ENCODE measurements at regions of chr2 and their contacts with region 1.

Region 1: GRCh38 chr2:25362049-25362433 is 20.3 kb upstream of the DNMT3A start:
- DNase-seq: peak; percentile 96
- H3K4me3 Mint-ChIP-seq: peak overlapping the region; percentile 83
- H3K27ac Mint-ChIP-seq: peak overlapping the region; percentile 82
- H3K4me1 Mint-ChIP-seq: peaks cover 22% of the 10 kb centered on the region
- H3K27me3 Mint-ChIP-seq: no peaks in the 10 kb centered on the region

Region 2: GRCh38 chr2:25309402-25309801 is 52.6 kb before region 1 on chr2:
- CTCF ChIA-PET with region 1: interaction called, 27 read pairs
- POLR2A ChIA-PET with region 1: interaction called, 27 read pairs
- DNase-seq: peak; percentile 66
- H3K4me3 Mint-ChIP-seq: no peak overlapping the region
- H3K27ac Mint-ChIP-seq: no peak overlapping the region
- H3K4me1 Mint-ChIP-seq: peaks cover 54% of the 10 kb centered on the region
- H3K27me3 Mint-ChIP-seq: no peaks in the 10 kb centered on the region

Region 3: DNA sequence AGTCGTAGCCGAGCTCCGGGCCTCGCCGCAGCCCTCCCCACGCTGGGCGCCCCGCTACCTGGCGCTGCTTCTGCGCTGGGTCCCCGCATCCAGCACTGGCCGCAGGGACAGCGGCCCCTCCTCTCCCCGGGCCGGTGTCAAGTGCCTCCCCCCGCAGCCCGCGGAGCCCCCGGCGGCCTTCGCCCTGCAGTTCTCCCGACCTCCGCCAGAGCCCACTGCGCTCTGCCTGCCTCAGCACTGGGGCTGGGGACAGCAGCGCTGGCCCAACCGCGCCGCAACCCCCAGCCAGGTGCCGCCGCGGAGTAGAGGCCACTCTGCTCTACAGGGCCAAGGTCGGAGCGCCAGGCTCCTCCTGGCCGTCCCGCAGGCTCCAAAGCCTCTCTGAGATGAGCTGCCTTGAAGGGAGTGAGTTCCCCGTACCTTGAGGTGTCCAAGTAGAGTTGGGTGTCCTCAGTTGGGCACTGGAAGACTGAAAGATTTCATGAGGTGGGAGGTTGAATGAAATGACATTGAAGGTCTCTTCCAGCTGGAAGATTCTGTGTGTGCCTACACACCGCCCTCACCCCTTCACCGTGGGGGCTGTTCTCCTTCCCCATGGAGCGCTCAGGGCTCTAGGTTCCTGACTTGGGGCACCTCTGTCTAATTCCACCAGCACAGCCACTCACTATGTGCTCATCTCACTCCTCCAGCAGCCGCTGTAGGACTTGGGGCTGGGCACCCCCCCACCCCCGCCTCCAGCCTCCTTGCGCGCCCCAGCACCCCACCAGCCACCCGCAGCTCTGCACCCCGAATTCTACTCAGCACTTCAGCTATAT is 19.5 kb before region 1 on chr2:
- CTCF ChIA-PET with region 1: interaction called, 43 read pairs
- POLR2A ChIA-PET with region 1: interaction called, 13 read pairs
- DNase-seq: peak; percentile 84
- H3K4me3 Mint-ChIP-seq: peak overlapping the region; percentile 83
- H3K27ac Mint-ChIP-seq: peak overlapping the region; percentile 62
- H3K4me1 Mint-ChIP-seq: peaks cover 24% of the 10 kb centered on the region
- H3K27me3 Mint-ChIP-seq: peaks cover 1% of the 10 kb centered on the region

Region 4: GRCh38 chr2:25453199-25453905 is 91.3 kb after region 1 on chr2:
- CTCF ChIA-PET with region 1: interaction called, 17 read pairs
- POLR2A ChIA-PET with region 1: interaction called, 12 read pairs
- DNase-seq: peak; percentile 37
- H3K4me3 Mint-ChIP-seq: no peak overlapping the region
- H3K27ac Mint-ChIP-seq: peak overlapping the region; percentile 83
- H3K4me1 Mint-ChIP-seq: peaks cover 29% of the 10 kb centered on the region
- H3K27me3 Mint-ChIP-seq: no peaks in the 10 kb centered on the region

Region 5: DNA sequence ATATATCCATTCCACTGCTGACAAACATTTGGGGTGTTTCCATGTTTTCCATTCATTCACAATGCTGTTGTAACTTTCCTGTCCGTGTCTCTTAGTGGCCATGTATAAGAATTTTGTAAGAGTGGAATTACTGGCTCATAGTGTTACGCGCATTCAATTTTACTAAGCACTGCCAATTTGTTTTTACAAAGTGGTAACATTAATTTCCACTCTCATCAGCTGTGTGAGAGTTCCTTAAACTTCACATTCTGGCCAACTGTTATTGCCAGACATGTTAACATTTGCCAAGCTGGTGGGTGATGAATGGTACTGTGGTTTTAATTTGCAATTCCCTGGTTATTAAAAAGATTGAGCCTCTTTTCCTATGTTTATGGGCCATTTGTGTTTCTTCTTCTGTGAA is 177.1 kb after region 1 on chr2:
- CTCF ChIA-PET with region 1: no interaction called
- POLR2A ChIA-PET with region 1: no interaction called
- DNase-seq: no peak
- H3K4me3 Mint-ChIP-seq: no peak overlapping the region
- H3K27ac Mint-ChIP-seq: no peak overlapping the region
- H3K4me1 Mint-ChIP-seq: peaks cover 1% of the 10 kb centered on the region
- H3K27me3 Mint-ChIP-seq: no peaks in the 10 kb centered on the region

Region 6: GRCh38 chr2:25567406-25567805 is 205.4 kb after region 1 on chr2:
- CTCF ChIA-PET with region 1: interaction called, 18 read pairs
- POLR2A ChIA-PET with region 1: interaction called, 6 read pairs
- DNase-seq: no peak
- H3K4me3 Mint-ChIP-seq: no peak overlapping the region
- H3K27ac Mint-ChIP-seq: no peak overlapping the region
- H3K4me1 Mint-ChIP-seq: peaks cover 13% of the 10 kb centered on the region
- H3K27me3 Mint-ChIP-seq: no peaks in the 10 kb centered on the region

Measured in activated CD4-positive, alpha-beta memory T cell treated with anti-CD3 and anti-CD28 coated beads, Interleukin-2, amount 10 ng/mL, durations not matched to agents 7 days and 5 days (primary cell).